CD14-positive monocyte (primary cell): ENCODE measurements at regions of chr2 and their contacts with region 1.

Region 1: DNA sequence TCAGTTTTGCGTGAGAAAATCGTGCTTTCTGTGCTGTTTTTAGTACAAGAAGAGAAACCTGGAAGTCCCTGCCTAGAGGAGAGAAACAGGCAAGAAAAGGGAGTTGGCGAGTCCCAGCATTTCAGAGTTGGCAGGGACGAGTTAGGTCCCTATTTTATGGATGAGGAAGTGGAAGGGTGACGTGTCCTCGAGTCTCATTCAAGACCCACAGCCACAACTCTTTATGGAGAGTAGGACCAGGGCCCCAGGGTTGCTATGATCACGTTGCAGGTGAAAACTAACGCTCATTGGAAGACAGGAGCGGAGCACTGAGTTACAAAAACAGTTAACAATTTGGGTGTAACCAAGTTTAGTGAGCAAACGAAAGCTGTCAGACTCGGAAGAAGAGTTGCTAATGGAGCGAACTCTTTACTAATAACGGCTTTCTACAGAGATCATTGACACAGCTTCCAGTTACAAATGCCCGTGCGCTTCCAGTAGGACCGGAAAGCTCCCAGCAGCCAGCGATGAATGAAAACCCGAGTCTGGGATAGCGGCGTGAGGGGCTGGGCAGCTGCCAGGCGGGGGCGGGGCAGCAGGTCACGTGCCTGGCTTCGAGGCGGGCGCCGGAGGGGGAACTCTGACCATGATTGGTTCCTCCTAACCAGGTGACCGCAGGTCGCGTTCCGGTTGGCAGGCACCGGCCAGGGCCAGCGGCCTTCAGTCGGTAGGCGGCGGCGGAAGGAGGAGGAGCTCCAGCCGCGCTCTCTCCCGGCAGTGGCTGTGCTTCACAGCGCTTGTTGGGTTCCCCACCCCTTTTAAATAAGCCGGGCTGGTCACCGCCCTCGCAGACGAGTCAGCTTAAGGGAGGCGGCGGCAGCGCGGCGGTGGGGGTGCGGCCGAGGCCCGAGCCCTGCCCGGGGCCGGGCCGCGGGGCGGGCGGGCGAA is at the start of gene CCNYL1:
- DNase-seq: peak; percentile 99
- H3K4me3 ChIP-seq: peak within 1 kb of the TSS; percentile 92 to 97 (median 94)
- H3K4me3 Mint-ChIP-seq: peak within 1 kb of the TSS; percentile 95 to 99
- H3K27ac ChIP-seq: peak within 1 kb of the TSS; percentile 89 to 98
- H3K27ac Mint-ChIP-seq: peak within 1 kb of the TSS; percentile 96 to 99 (median 98)
- H3K4me1 ChIP-seq: peaks cover 25 to 31% of the 10 kb centered on the region in 2 donors
- H3K4me1 Mint-ChIP-seq: peaks cover 38% of the 10 kb centered on the region
- H3K27me3 ChIP-seq: no peaks in the 10 kb centered on the region
- H3K27me3 Mint-ChIP-seq: peaks cover 0 to 3% (median 0%) of the 10 kb centered on the region in 3 donors
- CTCF ChIP-seq: no peak
- polyA plus RNA-seq, gene CCNYL1: 4.1 to 10.6 (median 4.6) TPM

Region 2: GRCh38 chr2:206488623-206489022 is 1222.5 kb before region 1 on chr2:
- intact Hi-C with region 1: no loop called
- DNase-seq: no peak
- H3K4me3 ChIP-seq: no peak overlapping the region
- H3K4me3 Mint-ChIP-seq: no peak overlapping the region
- H3K27ac ChIP-seq: no peak overlapping the region
- H3K27ac Mint-ChIP-seq: no peak overlapping the region
- H3K4me1 ChIP-seq: no peaks in the 10 kb centered on the region
- H3K4me1 Mint-ChIP-seq: no peaks in the 10 kb centered on the region
- H3K27me3 ChIP-seq: no peaks in the 10 kb centered on the region
- H3K27me3 Mint-ChIP-seq: peaks cover 0 to 6% (median 2%) of the 10 kb centered on the region in 3 donors
- CTCF ChIP-seq: no peak

Region 3: GRCh38 chr2:207251573-207252192 is 459.4 kb before region 1 on chr2:
- intact Hi-C with region 1: no loop called
- DNase-seq: no peak
- H3K4me3 ChIP-seq: no peak overlapping the region
- H3K4me3 Mint-ChIP-seq: no peak overlapping the region
- H3K27ac ChIP-seq: peak overlapping the region in 1 of 2 donors; percentile 11
- H3K27ac Mint-ChIP-seq: peak overlapping the region in 6 of 7 donors; percentile 4 to 79 (median 48)
- H3K4me1 ChIP-seq: peaks cover 62 to 73% of the 10 kb centered on the region in 2 donors
- H3K4me1 Mint-ChIP-seq: peaks cover 73% of the 10 kb centered on the region
- H3K27me3 ChIP-seq: no peaks in the 10 kb centered on the region
- H3K27me3 Mint-ChIP-seq: peaks cover 0 to 6% (median 1%) of the 10 kb centered on the region in 3 donors
- CTCF ChIP-seq: no peak

Region 4: GRCh38 chr2:207662203-207662602 is 48.9 kb before region 1 on chr2:
- intact Hi-C with region 1: loop called in 1 of 2 experiments (anchors 5 kb)
- DNase-seq: peak; percentile 86 to 96 (median 91)
- H3K4me3 ChIP-seq: no peak overlapping the region
- H3K4me3 Mint-ChIP-seq: no peak overlapping the region
- H3K27ac ChIP-seq: peak overlapping the region; percentile 80 to 86
- H3K27ac Mint-ChIP-seq: peak overlapping the region; percentile 89 to 97 (median 95)
- H3K4me1 ChIP-seq: peaks cover 8 to 11% of the 10 kb centered on the region in 2 donors
- H3K4me1 Mint-ChIP-seq: peaks cover 18% of the 10 kb centered on the region
- H3K27me3 ChIP-seq: no peaks in the 10 kb centered on the region
- H3K27me3 Mint-ChIP-seq: peaks cover 0 to 2% (median 0%) of the 10 kb centered on the region in 3 donors
- CTCF ChIP-seq: no peak